Esophagus muscularis mucosa (tissue), 4 donors: ENCODE measurements at regions of chr2 and their contacts with region 1.

Region 1: GRCh38 chr2:49616800-49617199 is 462.5 kb upstream of the FSHR start:
- DNase-seq: no peak
- H3K4me3 ChIP-seq: no peak overlapping the region
- H3K27ac ChIP-seq: no peak overlapping the region
- H3K4me1 ChIP-seq: no peaks in the 10 kb centered on the region
- H3K27me3 ChIP-seq: no peaks in the 10 kb centered on the region
- CTCF ChIP-seq: peak; percentile 29 to 54 (median 43)
- EP300 ChIP-seq: no peak
- POLR2A ChIP-seq: no peak

Region 2: DNA sequence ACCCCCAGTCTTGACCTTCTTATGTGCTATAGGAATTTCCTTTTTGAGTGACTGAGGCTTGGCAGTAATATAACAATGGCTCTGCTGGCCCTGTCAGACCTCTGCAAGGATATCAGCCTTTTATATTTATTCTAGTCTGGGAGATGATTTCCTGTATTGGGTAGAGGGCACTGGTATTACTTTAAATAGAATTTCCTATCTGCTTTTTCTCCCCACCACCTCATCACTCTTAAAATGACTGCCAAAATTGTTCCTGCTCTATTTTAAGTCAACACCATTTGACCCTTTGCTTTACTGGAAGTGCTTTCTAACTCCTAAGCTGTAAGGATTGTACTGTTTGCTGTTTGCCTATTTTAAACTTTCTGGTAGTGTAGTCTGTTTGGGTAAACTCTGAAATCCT is 195.9 kb after region 1 on chr2:
- intact Hi-C with region 1: no loop called
- DNase-seq: no peak
- H3K4me3 ChIP-seq: no peak overlapping the region
- H3K27ac ChIP-seq: peak overlapping the region in 3 of 4 donors; percentile 10 to 68 (median 55)
- H3K4me1 ChIP-seq: peaks cover 13 to 38% (median 33%) of the 10 kb centered on the region in 4 donors
- H3K27me3 ChIP-seq: no peaks in the 10 kb centered on the region
- CTCF ChIP-seq: no peak
- EP300 ChIP-seq: no peak
- POLR2A ChIP-seq: no peak

Region 3: DNA sequence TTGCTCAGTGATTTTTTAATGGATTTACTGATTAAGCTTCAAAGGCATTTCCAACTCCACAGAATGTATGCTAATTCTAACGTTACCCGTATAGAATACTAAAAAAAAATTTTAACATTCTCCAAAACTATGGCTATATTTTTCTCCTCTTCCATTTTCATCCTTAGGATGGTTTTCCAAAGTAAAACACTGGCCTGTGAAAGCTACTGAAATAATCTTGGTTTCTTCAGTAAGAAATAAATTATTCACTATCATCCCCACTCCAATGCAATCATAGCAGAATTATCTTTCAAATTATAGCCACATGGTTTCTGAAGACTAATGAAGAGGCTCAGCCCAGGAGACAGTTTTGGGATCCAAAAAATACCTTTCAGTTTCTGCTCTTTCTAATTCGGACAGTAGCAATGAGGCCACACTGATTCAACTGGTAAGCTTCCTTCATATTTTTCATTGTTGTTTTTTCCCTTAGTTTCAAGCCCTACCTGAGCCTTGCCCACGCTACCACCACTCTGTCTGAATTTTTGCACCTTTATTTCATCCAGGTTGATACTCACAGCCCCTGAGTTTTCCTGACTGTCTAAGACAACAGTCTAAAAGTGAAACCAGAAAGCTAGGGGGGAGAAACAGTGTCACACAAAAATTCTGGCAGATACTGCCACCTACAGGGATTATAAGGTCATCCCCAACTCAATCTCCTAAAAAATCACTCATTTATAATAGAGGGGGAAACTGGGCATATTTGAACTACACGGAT is 527.2 kb after region 1 on chr2:
- intact Hi-C with region 1: loop called (anchors 5 kb)
- DNase-seq: no peak
- H3K4me3 ChIP-seq: peak overlapping the region; percentile 35 to 53 (median 46)
- H3K27ac ChIP-seq: peak overlapping the region; percentile 22 to 54 (median 46)
- H3K4me1 ChIP-seq: peaks cover 0 to 9% (median 9%) of the 10 kb centered on the region in 4 donors
- H3K27me3 ChIP-seq: no peaks in the 10 kb centered on the region
- CTCF ChIP-seq: peak; percentile 58 to 65 (median 64)
- EP300 ChIP-seq: no peak
- POLR2A ChIP-seq: no peak

Region 4: DNA sequence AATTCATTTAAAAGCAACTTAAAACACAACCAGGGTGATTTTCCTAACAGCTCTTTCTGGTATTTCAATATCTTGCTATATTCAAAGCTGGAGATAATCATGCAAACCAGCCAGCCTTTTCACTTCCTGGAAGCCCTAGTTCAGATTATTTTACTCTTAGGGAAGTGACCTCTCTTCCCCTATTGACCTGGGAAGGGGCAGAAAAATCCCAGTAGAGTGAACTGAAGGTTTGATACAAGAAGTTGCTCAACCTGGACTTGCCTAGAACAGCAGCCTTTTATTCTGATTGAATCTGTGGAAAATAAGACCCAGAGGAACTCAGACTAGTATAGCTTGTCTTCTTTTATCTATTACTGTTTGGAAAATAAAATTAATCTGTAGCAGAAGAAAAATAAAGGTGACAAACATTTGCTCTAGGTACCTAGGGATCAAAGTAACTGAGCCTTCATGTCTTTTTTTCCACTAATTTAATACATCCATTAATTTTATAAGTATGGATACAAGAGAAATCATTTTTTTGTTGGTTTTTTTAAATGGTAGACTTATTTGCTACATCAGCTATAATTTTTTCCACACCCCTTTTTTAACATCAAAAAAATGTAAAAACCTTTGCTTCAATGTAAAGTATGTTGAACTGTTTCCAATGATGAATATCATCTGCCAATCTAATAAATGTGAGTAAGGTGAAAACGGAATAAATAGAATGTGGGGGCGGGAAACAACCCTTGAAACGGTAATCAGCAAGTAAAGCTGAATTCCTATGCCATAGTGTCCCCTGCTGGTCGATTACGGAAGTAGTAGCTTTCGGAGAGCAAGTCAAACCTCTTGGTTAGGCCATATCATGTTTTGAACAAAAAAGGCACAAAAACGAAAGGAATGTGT is 785.2 kb after region 1 on chr2:
- intact Hi-C with region 1: loop called (anchors 10 kb)
- DNase-seq: no peak
- H3K4me3 ChIP-seq: no peak overlapping the region
- H3K27ac ChIP-seq: no peak overlapping the region
- H3K4me1 ChIP-seq: peaks cover 0 to 4% (median 0%) of the 10 kb centered on the region in 4 donors
- H3K27me3 ChIP-seq: no peaks in the 10 kb centered on the region
- CTCF ChIP-seq: peak; percentile 63 to 82 (median 79)
- EP300 ChIP-seq: no peak
- POLR2A ChIP-seq: no peak